B cell (primary cell): ENCODE measurements at regions of chr13 and their contacts with region 1.

Region 1: DNA sequence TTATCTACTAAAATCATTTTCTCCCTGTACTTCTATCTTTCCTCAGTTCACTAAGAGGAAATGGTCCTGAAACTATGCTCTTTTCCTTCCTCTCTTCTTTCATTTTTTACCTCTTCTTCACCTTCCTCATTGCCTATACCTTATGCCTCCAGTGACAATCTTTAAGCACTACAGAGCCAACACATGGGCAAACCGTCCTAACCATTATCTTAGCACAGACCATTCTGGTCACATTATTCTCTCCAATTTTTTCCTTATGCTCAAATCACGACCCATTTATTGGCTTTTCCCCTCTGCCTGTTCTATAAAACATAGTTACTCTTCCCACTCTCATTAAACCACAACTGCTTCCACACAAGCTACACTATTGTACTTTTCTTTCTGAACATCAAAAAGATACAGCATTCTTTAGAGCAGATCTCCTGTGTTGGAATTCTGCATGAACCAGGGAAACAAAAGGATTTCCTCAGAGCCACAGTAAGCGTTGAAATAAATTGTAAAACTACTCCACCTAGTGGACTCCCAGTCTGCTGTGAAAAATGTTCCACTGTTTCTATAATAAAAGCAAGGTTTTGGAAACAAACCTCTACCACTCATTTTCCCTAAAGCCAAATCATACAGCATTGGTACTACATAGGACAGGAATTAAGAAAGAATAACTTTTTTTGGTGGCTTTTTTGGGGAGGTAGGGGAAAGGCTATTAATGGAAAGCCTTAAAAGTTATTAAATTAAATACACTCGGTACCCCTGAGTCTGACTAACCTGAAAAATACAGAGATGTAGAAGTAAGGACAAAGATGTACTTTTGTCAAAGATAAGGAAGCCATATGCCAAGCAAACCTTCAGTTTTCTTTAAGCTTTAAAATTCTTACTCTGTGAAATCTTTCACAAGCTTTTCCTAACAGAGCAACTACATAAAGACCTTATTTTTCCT is 19.5 kb downstream of the NUFIP1 start:
- DNase-seq: peak; percentile 37
- ATAC-seq: no peak
- H3K4me3 ChIP-seq: no peak overlapping the region
- H3K4me3 Mint-ChIP-seq: no peak overlapping the region
- H3K27ac ChIP-seq: no peak overlapping the region
- H3K27ac Mint-ChIP-seq: no peak overlapping the region
- H3K4me1 ChIP-seq: peaks cover 9 to 16% of the 10 kb centered on the region in 2 donors
- H3K4me1 Mint-ChIP-seq: no peaks in the 10 kb centered on the region
- H3K27me3 ChIP-seq: no peaks in the 10 kb centered on the region
- H3K27me3 Mint-ChIP-seq: no peaks in the 10 kb centered on the region
- CTCF ChIP-seq: peak; percentile 75

Region 2: GRCh38 chr13:44141725-44142539 is 827.9 kb before region 1 on chr13:
- CTCF ChIA-PET with region 1: no interaction called
- POLR2A ChIA-PET with region 1: no interaction called
- intact Hi-C with region 1: loop called (anchors 5 kb)
- DNase-seq: peak; percentile 97
- ATAC-seq: peak; percentile 99
- H3K4me3 ChIP-seq: peak overlapping the region; percentile 69 to 91 (median 81)
- H3K4me3 Mint-ChIP-seq: peak overlapping the region; percentile 96
- H3K27ac ChIP-seq: peak overlapping the region; percentile 77 to 93
- H3K27ac Mint-ChIP-seq: peak overlapping the region; percentile 94
- H3K4me1 ChIP-seq: peaks cover 22 to 26% of the 10 kb centered on the region in 2 donors
- H3K4me1 Mint-ChIP-seq: peaks cover 28% of the 10 kb centered on the region
- H3K27me3 ChIP-seq: no peaks in the 10 kb centered on the region
- H3K27me3 Mint-ChIP-seq: peaks cover 7% of the 10 kb centered on the region
- CTCF ChIP-seq: no peak

Region 3: DNA sequence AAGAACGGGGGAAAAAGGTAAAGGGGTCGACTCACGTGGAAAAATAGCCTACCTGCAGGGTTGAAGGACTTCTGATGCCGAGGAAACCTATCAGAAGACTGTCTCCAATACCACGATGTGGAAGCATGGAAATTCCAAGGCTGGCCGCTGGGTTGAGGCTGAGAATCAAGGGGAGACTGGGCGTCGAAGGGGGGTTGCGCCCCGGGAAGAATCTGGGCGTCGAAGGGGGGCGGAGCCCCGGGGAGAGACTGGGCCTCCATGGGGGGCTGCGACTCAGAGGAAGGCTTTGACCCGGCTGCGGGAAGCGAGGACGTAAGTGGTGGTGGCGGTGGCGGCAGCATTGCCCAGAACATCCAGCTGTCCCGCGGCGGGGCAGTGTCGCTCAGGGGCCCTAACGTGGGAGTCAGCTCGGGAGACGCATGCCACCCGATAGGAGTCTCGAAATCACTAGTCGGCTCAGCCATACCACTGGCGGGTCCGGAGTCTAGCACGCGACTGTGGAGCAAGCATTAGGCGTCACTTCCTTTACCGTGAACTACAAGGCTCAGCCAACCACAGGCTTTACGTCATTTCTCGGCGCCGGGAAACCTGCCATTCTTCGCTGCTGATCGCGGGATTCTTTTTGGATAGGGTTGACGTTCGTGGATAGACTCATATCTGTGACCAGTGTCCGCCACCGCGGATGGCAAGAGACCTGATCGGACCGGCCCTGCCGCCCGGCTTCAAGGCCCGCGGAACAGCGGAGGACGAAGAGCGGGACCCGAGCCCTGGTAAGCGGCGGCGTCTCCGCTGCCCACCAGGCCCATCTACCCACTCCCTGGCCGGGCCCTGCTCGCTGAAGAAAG is 19.4 kb after region 1 on chr13 and contains the starts of genes GPALPP1 and NUFIP1:
- CTCF ChIA-PET with region 1: interaction called, 7 read pairs
- POLR2A ChIA-PET with region 1: no interaction called
- intact Hi-C with region 1: loop called (anchors 2 kb)
- DNase-seq: peak; percentile 93
- ATAC-seq: peak; percentile 97
- H3K4me3 ChIP-seq: peak within 1 kb of the TSS; percentile 92 to 99 (median 98)
- H3K4me3 Mint-ChIP-seq: peak within 1 kb of the TSS; percentile 100
- H3K27ac ChIP-seq: peak within 1 kb of the TSS; percentile 79 to 89
- H3K27ac Mint-ChIP-seq: peak within 1 kb of the TSS; percentile 98
- H3K4me1 ChIP-seq: peaks cover 13 to 24% of the 10 kb centered on the region in 2 donors
- H3K4me1 Mint-ChIP-seq: peaks cover 43% of the 10 kb centered on the region
- H3K27me3 ChIP-seq: no peaks in the 10 kb centered on the region
- H3K27me3 Mint-ChIP-seq: no peaks in the 10 kb centered on the region
- CTCF ChIP-seq: no peak
- total RNA-seq, gene GPALPP1: 41.8 and 45.6 TPM in 2 replicates
- total RNA-seq, gene NUFIP1: 4.7 and 5.8 TPM in 2 replicates

Region 4: GRCh38 chr13:45280751-45281634 is 311.2 kb after region 1 on chr13:
- CTCF ChIA-PET with region 1: interaction called, 16 read pairs
- POLR2A ChIA-PET with region 1: no interaction called
- intact Hi-C with region 1: no loop called
- DNase-seq: peak; percentile 52
- ATAC-seq: peak; percentile 76
- H3K4me3 ChIP-seq: no peak overlapping the region
- H3K4me3 Mint-ChIP-seq: no peak overlapping the region
- H3K27ac ChIP-seq: no peak overlapping the region
- H3K27ac Mint-ChIP-seq: no peak overlapping the region
- H3K4me1 ChIP-seq: peaks cover 3 to 7% of the 10 kb centered on the region in 2 donors
- H3K4me1 Mint-ChIP-seq: peaks cover 14% of the 10 kb centered on the region
- H3K27me3 ChIP-seq: no peaks in the 10 kb centered on the region
- H3K27me3 Mint-ChIP-seq: no peaks in the 10 kb centered on the region
- CTCF ChIP-seq: peak; percentile 48

Region 5: DNA sequence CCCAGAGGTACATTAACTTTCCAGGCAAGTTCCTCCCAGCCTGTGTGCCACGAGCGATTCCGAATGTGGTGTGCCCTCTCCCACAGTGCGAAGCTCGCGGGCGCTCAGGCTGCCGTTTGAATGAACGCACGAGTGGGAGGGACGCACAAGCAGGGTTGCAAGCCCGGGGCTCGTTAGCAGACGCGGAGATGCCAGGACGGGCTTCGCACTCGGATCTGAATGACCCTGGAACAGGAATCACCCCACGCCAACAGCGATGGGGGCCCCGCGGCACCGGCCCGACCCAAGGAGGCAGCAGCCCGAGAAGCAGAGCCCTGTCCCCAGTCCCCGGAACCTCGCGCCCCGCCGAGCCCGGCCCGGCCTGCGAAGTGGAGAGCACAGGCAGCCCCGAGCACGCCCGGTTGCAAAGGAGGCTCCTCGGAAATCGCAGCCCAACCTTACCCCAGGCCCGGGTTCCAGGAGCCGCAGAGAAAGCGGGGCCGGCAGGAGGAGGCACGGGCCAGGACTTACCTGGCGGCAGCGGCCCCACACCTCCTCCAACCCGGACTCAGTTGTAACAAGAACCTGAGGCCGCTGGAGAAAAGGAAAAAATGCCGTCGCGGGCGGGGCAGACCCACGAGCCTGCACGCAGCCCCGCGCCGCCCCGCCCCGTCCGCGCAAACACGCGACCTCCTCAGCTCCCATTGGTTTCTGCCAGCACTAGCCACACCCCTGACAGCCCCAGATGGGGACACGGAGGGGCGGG is 448.1 kb after region 1 on chr13 and contains the start of gene SLC25A30:
- CTCF ChIA-PET with region 1: no interaction called
- POLR2A ChIA-PET with region 1: no interaction called
- intact Hi-C with region 1: loop called (anchors 5 kb)
- DNase-seq: peak; percentile 92
- ATAC-seq: peak; percentile 95
- H3K4me3 ChIP-seq: peak within 1 kb of the TSS; percentile 68 to 91 (median 90)
- H3K4me3 Mint-ChIP-seq: peak within 1 kb of the TSS; percentile 97
- H3K27ac ChIP-seq: peak within 1 kb of the TSS; percentile 70 to 87
- H3K27ac Mint-ChIP-seq: peak within 1 kb of the TSS; percentile 96
- H3K4me1 ChIP-seq: peaks cover 9 to 11% of the 10 kb centered on the region in 2 donors
- H3K4me1 Mint-ChIP-seq: peaks cover 21% of the 10 kb centered on the region
- H3K27me3 ChIP-seq: no peaks in the 10 kb centered on the region
- H3K27me3 Mint-ChIP-seq: no peaks in the 10 kb centered on the region
- CTCF ChIP-seq: no peak
- total RNA-seq, gene SLC25A30: 16.9 and 25.8 TPM in 2 replicates